ENCODE measurements at regions of chr2 and their contacts with region 1.

Region 1: DNA sequence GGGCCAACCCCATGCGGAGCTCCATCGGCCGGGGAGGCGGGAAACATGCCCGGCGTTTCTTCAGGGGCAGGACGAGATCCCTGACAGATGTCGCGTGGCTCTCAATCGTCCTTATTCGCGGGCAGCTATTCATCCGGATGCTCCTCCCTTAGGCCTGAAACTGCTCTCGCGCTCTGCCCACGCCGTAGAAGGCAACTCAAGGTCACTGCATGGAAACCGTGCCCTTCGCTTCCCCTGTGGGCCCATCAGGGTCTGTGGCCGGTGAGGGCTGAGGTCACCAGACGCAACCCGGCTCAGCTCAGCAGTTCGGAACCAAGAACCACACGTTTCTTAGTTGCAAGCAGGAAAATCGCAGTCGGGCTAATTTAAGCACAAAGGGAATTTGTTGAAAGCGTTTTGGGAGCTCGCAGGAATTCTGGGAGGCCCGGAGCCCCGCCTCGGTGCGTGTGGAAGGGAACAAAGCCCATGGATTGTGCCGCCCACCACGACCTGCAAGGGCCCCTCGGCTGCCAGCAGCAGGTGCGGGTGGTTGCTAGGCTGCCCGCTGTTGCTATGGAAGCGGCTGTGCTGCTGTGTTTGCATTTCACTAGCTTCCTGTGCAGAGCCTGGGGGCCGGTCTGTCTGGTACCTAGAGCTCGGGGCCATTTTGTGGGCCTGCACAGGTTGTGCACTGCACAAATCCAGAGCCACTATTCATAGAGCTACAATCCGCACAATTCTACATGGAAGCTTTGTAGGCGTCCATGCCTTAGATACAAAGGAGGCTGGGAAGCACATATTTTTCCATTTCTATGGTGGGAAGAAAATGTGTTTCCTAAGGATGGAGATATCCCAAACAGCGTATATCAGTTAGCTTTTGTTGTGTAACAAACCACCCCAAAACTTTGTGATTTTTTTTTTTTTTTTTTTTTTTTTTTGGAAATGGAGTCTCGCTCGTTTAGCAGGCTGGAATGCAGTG is 6.0 kb upstream of the ALLC start:
- DNase-seq: peak; percentile 92
- H3K4me3 ChIP-seq: peak overlapping the region in 7 of 8 donors; percentile 9 to 61 (median 32)
- H3K27ac ChIP-seq: peak overlapping the region; percentile 41 to 85 (median 72)
- H3K4me1 ChIP-seq: peaks cover 11 to 36% (median 23%) of the 10 kb centered on the region in 6 donors
- H3K27me3 ChIP-seq: peaks cover 0 to 28% (median 0%) of the 10 kb centered on the region in 7 donors
- CTCF ChIP-seq: peak in 2 of 11 experiments; percentile 11 to 25
- POLR2A ChIP-seq: no peak

Region 2: DNA sequence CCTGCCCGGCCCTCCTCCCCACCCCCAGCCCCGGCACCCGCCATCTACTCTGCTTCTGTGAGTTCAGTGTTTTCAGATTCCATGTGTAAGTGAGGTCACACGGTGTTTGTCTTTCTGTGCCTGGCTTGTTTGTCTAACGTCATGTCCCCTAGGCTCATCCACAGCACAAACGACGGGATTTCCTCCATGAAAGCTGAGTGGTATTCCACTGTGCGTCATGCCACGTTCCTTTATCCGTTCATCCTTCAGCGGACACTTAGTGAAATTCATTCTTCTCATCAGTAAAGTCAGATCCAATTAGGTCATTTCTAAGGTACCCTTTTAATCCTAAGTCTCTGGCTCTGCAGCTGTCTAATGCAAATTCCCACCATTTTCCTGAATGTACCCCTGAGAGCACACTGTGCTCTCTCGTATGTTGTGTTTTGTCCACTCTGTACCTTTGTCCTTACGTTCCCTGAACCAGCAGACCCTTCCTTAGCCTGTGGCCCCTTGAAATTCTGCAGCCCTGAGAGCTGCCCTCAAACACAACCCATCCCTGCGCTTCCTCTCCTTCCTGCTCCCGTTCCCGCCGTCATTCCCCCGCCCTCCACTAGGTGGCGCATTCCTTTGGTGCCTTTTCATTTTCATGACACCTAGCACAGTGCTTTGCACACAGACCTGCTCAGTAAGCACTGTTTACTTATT is 228.3 kb before region 1 on chr2:
- intact Hi-C with region 1: loop called (anchors 5 kb)
- DNase-seq: peak; percentile 91
- H3K4me3 ChIP-seq: no peak overlapping the region
- H3K27ac ChIP-seq: no peak overlapping the region
- H3K4me1 ChIP-seq: peaks cover 0 to 5% (median 0%) of the 10 kb centered on the region in 6 donors
- H3K27me3 ChIP-seq: no peaks in the 10 kb centered on the region
- CTCF ChIP-seq: peak; percentile 86 to 99 (median 95)
- POLR2A ChIP-seq: no peak

Region 3: GRCh38 chr2:3575534-3576262 is 76.3 kb before region 1 on chr2:
- intact Hi-C with region 1: loop called (anchors 5 kb)
- DNase-seq: no peak
- H3K4me3 ChIP-seq: peak overlapping the region; percentile 61 to 86 (median 71)
- H3K27ac ChIP-seq: peak overlapping the region; percentile 76 to 95 (median 90)
- H3K4me1 ChIP-seq: peaks cover 31 to 66% (median 50%) of the 10 kb centered on the region in 6 donors
- H3K27me3 ChIP-seq: no peaks in the 10 kb centered on the region
- CTCF ChIP-seq: peak in 1 of 11 experiments; percentile 13
- POLR2A ChIP-seq: no peak

Measured in spleen (tissue), 13 donors.